Ovary (tissue), 10 donors: ENCODE measurements at regions of chr9 and their contacts with region 1.

Region 1: DNA sequence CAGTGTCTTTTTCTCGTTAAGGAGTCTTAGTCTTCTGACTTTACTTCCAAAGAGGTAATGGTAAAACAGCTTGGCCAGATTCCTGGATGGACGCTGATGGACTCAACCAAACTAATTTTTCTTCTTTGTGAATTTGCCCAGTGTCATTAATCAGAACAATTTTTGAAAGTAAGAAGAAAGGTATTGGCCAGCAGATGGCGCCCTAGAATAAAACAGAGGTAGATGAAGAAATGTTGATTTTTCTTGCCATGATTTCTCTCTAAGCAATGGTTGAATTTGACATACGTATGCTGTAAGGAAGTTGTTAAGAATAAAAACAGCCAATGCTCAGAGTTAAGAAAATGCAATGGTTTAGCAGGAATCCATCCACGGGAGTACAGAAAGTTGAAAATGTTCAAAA is 500.0 kb downstream of the DIRAS2 start:
- DNase-seq: no peak
- H3K4me3 ChIP-seq: no peak overlapping the region
- H3K27ac ChIP-seq: no peak overlapping the region
- H3K4me1 ChIP-seq: no peaks in the 10 kb centered on the region
- H3K27me3 ChIP-seq: no peaks in the 10 kb centered on the region
- CTCF ChIP-seq: no peak
- EP300 ChIP-seq: no peak
- POLR2A ChIP-seq: no peak

Region 2: GRCh38 chr9:89825669-89826068 is 316.9 kb before region 1 on chr9:
- intact Hi-C with region 1: no loop called
- DNase-seq: no peak
- H3K4me3 ChIP-seq: no peak overlapping the region
- H3K27ac ChIP-seq: no peak overlapping the region
- H3K4me1 ChIP-seq: no peaks in the 10 kb centered on the region
- H3K27me3 ChIP-seq: no peaks in the 10 kb centered on the region
- CTCF ChIP-seq: no peak
- EP300 ChIP-seq: no peak
- POLR2A ChIP-seq: no peak

Region 3: DNA sequence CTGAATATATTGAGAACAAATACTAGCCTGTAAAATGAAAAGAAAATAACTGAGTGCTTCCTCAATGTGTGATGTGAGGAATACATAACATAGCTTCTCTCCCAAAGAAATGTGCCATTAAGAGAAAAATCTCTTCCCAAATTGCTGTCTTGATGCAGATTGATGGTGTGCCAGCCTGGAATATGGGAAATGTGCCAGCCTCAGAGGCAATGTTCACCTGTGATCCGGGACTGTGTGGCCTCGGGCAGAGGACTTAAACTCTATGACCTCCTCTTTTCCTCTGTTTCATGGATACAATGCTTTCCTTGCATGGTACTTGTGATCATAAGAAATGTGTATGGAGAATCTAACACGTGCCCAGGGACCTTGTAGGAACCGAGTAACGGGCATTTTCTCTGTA is 129.1 kb after region 1 on chr9:
- intact Hi-C with region 1: no loop called
- DNase-seq: no peak
- H3K4me3 ChIP-seq: no peak overlapping the region
- H3K27ac ChIP-seq: no peak overlapping the region
- H3K4me1 ChIP-seq: no peaks in the 10 kb centered on the region
- H3K27me3 ChIP-seq: no peaks in the 10 kb centered on the region
- CTCF ChIP-seq: no peak
- EP300 ChIP-seq: no peak
- POLR2A ChIP-seq: no peak

Region 4: DNA sequence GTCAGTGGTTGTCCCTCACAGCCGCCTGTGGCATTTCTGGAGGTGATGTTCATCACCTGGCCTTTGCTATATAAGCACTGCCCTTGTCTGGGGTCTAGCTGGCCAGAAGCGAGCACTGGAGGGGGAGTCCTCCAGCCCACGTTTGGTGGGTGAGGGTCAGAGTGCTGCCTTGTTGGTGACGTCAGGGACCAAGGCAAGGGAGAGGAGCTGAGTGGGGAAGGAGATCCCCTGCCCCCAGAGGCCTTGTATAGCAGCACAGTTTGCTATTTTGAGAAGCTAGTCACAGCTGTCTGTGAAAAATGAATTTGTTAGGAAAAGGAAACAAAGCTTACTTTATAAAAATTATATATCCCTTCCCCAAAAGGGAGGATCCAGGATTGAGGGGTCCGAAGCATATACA is 708.9 kb after region 1 on chr9:
- intact Hi-C with region 1: loop called in 1 of 4 experiments (anchors 10 kb)
- DNase-seq: no peak
- H3K4me3 ChIP-seq: no peak overlapping the region
- H3K27ac ChIP-seq: no peak overlapping the region
- H3K4me1 ChIP-seq: no peaks in the 10 kb centered on the region
- H3K27me3 ChIP-seq: no peaks in the 10 kb centered on the region
- CTCF ChIP-seq: no peak
- EP300 ChIP-seq: no peak
- POLR2A ChIP-seq: no peak

Region 5: DNA sequence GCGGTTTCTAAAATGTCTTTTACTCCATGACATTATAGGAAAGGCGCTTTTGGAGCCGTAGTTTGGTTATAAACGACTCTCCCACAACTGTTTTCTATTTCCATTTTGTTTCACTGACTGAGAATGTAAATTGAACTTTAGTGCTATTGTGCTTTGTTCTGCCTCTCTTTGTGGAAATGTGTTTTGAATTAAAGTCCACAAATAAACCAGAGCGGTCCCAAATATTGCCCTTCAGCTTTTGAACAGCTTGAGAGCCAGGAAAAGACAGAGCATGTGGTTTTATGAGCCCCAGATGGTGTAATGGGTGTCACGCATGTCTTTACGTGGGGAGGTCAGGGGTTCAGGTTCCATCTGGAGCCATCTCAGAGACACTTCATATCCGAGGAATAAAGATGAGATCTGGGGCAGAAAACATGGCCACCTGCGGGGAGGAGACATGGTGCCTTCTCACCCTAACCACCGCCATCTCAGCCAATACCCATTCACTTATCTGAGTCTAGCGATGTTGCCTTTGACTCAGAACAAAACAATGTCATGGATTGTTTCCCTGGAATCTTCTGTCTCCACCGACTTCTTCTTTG is 1850.0 kb after region 1 on chr9:
- intact Hi-C with region 1: loop called in 1 of 4 experiments (anchors 10 kb)
- DNase-seq: no peak
- H3K4me3 ChIP-seq: no peak overlapping the region
- H3K27ac ChIP-seq: no peak overlapping the region
- H3K4me1 ChIP-seq: no peaks in the 10 kb centered on the region
- H3K27me3 ChIP-seq: no peaks in the 10 kb centered on the region
- CTCF ChIP-seq: no peak
- EP300 ChIP-seq: no peak
- POLR2A ChIP-seq: no peak